B cell (primary cell): ENCODE measurements at regions of chr1 and their contacts with region 1.

Region 1: DNA sequence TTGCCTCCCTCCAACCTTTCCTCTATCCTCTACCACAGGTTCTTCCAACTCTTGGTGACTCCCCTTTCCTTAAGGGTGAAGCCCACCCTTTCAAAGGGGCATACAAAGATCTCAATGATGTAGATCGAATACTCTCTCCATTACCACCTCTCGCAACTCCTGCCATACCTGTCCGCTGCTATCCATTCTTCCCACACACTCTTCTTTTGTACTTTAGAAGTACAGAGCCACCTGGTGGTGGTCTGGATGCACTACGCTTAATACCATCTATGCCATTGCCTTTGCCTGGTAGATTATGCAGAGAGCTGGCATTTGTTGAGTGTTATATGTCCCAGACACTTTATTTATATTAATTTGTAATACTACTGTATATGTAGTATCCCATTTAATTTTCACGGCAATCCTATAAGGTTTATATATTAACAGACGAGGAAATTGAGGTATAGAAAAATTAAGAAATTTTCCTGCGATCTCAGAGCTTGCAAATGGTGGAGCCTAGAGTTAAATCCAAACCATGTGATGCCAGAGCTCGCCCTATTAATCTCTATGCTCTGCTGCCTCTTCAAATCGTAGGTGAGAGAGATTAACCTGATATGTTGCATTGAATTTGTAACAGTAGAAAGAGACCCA is 22.9 kb downstream of the TSHB start:
- DNase-seq: peak; percentile 62
- ATAC-seq: peak; percentile 73
- H3K4me3 ChIP-seq: no peak overlapping the region
- H3K4me3 Mint-ChIP-seq: no peak overlapping the region
- H3K27ac ChIP-seq: no peak overlapping the region
- H3K27ac Mint-ChIP-seq: no peak overlapping the region
- H3K4me1 ChIP-seq: no peaks in the 10 kb centered on the region
- H3K4me1 Mint-ChIP-seq: no peaks in the 10 kb centered on the region
- H3K27me3 ChIP-seq: peaks cover 0 to 2% (median 0%) of the 10 kb centered on the region in 4 experiments
- H3K27me3 Mint-ChIP-seq: no peaks in the 10 kb centered on the region
- CTCF ChIP-seq: peak; percentile 98

Region 2: DNA sequence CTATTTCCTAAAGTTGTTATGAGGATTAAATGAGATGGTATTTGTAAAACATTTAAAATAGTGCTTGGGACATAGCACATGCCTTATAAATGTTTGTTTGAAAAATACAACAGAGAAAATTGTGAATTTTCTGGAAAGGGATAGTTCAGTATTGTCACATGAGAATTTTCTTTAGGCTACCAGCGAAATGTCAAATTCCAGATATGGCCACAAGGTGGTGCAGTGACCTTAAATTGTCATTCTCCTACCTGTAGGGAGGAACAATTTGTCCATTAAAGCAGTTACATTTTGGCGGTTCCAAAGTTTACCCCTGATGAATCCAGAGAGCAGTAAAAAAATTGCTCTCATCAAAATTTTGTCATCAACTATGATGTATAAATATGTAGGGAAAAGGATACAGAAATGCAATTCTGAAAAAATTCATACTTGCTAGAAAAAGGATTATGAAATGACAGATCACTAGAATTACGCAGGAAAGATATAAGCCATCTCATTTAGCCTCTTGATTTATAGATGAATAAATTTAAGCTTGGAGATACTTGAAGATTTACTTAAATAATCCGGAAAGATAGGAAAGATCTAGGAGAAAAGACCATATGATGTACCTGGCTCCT is 73.2 kb before region 1 on chr1:
- CTCF ChIA-PET with region 1: interaction called, 6 read pairs
- POLR2A ChIA-PET with region 1: no interaction called
- intact Hi-C with region 1: loop called (anchors 2 kb)
- DNase-seq: peak; percentile 69
- ATAC-seq: no peak
- H3K4me3 ChIP-seq: no peak overlapping the region
- H3K4me3 Mint-ChIP-seq: no peak overlapping the region
- H3K27ac ChIP-seq: no peak overlapping the region
- H3K27ac Mint-ChIP-seq: no peak overlapping the region
- H3K4me1 ChIP-seq: no peaks in the 10 kb centered on the region
- H3K4me1 Mint-ChIP-seq: no peaks in the 10 kb centered on the region
- H3K27me3 ChIP-seq: peaks cover 0 to 11% (median 2%) of the 10 kb centered on the region in 4 experiments
- H3K27me3 Mint-ChIP-seq: peaks cover 42% of the 10 kb centered on the region
- CTCF ChIP-seq: peak; percentile 97

Region 3: GRCh38 chr1:115067161-115067859 is 14.7 kb after region 1 on chr1:
- CTCF ChIA-PET with region 1: interaction called, 17 read pairs
- POLR2A ChIA-PET with region 1: no interaction called
- intact Hi-C with region 1: no loop called
- DNase-seq: no peak
- ATAC-seq: no peak
- H3K4me3 ChIP-seq: no peak overlapping the region
- H3K4me3 Mint-ChIP-seq: no peak overlapping the region
- H3K27ac ChIP-seq: no peak overlapping the region
- H3K27ac Mint-ChIP-seq: no peak overlapping the region
- H3K4me1 ChIP-seq: peaks cover 11 to 13% of the 10 kb centered on the region in 2 donors
- H3K4me1 Mint-ChIP-seq: peaks cover 17% of the 10 kb centered on the region
- H3K27me3 ChIP-seq: no peaks in the 10 kb centered on the region
- H3K27me3 Mint-ChIP-seq: no peaks in the 10 kb centered on the region
- CTCF ChIP-seq: no peak

Region 4: GRCh38 chr1:115089420-115090185 is 37.0 kb after region 1 on chr1 and contains the start of gene TSPAN2:
- CTCF ChIA-PET with region 1: interaction called, 18 read pairs
- POLR2A ChIA-PET with region 1: no interaction called
- intact Hi-C with region 1: no loop called
- DNase-seq: peak; percentile 64
- ATAC-seq: peak; percentile 89
- H3K4me3 ChIP-seq: peak within 1 kb of the TSS; percentile 50 to 74 (median 72)
- H3K4me3 Mint-ChIP-seq: peak within 1 kb of the TSS; percentile 88
- H3K27ac ChIP-seq: peak within 1 kb of the TSS in 1 of 2 donors; percentile 26
- H3K27ac Mint-ChIP-seq: peak within 1 kb of the TSS; percentile 62
- H3K4me1 ChIP-seq: peaks cover 5 to 16% of the 10 kb centered on the region in 2 donors
- H3K4me1 Mint-ChIP-seq: peaks cover 11% of the 10 kb centered on the region
- H3K27me3 ChIP-seq: peaks cover 0 to 16% (median 4%) of the 10 kb centered on the region in 4 experiments
- H3K27me3 Mint-ChIP-seq: peaks cover 19% of the 10 kb centered on the region
- CTCF ChIP-seq: no peak
- total RNA-seq, gene TSPAN2: 0.17 and 0.34 TPM in 2 replicates

Region 5: DNA sequence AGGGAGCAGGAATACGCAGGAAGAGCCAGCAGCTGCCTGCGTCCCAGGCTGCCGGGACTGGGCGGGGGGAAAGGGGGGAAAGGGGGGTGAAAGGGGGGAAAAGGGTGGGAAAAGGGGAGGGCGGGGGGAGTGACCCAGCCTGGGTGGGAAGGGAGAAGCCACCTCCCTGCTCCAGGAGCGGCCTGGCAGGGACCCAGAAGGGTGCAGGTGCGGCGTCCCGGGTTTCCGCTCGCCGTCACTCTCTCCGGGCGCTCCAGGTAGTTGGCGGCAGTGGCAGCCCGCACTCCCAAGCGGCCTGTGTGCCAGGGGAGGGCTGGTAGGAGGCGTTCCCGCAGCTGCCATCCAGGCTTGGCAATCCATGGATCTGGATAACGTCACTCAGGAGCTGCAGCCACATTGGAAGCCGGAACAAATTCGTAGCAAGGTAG is 426.5 kb after region 1 on chr1:
- CTCF ChIA-PET with region 1: no interaction called
- POLR2A ChIA-PET with region 1: no interaction called
- intact Hi-C with region 1: no loop called
- DNase-seq: no peak
- ATAC-seq: no peak
- H3K4me3 ChIP-seq: no peak overlapping the region
- H3K4me3 Mint-ChIP-seq: no peak overlapping the region
- H3K27ac ChIP-seq: no peak overlapping the region
- H3K27ac Mint-ChIP-seq: no peak overlapping the region
- H3K4me1 ChIP-seq: no peaks in the 10 kb centered on the region
- H3K4me1 Mint-ChIP-seq: no peaks in the 10 kb centered on the region
- H3K27me3 ChIP-seq: peaks cover 0 to 4% (median 0%) of the 10 kb centered on the region in 4 experiments
- H3K27me3 Mint-ChIP-seq: peaks cover 17% of the 10 kb centered on the region
- CTCF ChIP-seq: no peak